ENCODE measurements at regions of chr6 and their contacts with region 1.

Region 1: GRCh38 chr6:106085984-106086813 is at the start of gene PRDM1:
- DNase-seq: peak; percentile 95
- H3K4me3 Mint-ChIP-seq: peak within 1 kb of the TSS; percentile 93
- H3K27ac Mint-ChIP-seq: peak within 1 kb of the TSS; percentile 87
- H3K4me1 Mint-ChIP-seq: peaks cover 72% of the 10 kb centered on the region
- H3K27me3 Mint-ChIP-seq: peaks cover 10% of the 10 kb centered on the region
- total RNA-seq, gene PRDM1: 35.9 and 37.4 TPM in 2 replicates

Region 2: DNA sequence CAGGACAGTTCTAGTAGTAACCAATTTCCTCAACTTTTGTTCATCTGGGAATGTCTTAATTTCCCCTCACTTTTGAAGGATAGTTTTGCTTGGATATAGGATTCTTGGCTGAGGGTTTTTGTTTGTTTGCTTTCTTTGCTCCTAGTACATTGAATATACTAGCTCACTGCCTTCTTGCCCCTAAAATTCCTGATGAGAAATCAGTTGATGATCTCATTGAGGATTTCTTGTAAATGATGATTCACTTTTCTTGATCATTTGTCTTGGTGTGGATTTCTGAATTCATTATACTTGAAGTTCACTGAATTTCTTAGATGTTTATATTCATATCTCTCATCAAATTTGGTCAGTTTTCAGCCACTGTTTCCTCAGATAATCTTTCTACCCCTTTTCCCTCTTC is 49.1 kb before region 1 on chr6:
- intact Hi-C with region 1: no loop called
- DNase-seq: no peak
- H3K4me3 Mint-ChIP-seq: peak overlapping the region; percentile 6
- H3K27ac Mint-ChIP-seq: no peak overlapping the region
- H3K4me1 Mint-ChIP-seq: peaks cover 14% of the 10 kb centered on the region
- H3K27me3 Mint-ChIP-seq: no peaks in the 10 kb centered on the region

Region 3: GRCh38 chr6:106223300-106223930 is 137.2 kb after region 1 on chr6:
- intact Hi-C with region 1: loop called (anchors 1 kb)
- DNase-seq: peak; percentile 91
- H3K4me3 Mint-ChIP-seq: no peak overlapping the region
- H3K27ac Mint-ChIP-seq: no peak overlapping the region
- H3K4me1 Mint-ChIP-seq: peaks cover 32% of the 10 kb centered on the region
- H3K27me3 Mint-ChIP-seq: no peaks in the 10 kb centered on the region

Region 4: DNA sequence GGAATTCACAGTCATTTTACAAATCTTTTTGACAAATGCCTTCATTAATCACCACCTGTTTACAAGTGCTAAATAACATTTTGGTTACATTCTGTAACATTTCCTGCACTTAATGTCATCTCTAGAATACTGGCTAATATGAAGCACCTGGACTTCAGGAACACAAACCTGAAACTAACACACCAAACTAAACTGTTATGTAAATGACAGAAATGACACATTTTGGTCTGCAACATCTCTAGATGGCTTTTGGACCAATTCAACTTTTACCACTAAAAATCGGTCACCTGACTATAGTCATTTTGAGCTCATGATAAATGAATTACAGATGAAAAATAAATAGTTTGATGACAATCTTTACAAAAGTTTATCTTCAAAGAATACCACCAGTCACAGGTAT is 158.7 kb after region 1 on chr6:
- intact Hi-C with region 1: no loop called
- DNase-seq: no peak
- H3K4me3 Mint-ChIP-seq: no peak overlapping the region
- H3K27ac Mint-ChIP-seq: no peak overlapping the region
- H3K4me1 Mint-ChIP-seq: peaks cover 11% of the 10 kb centered on the region
- H3K27me3 Mint-ChIP-seq: no peaks in the 10 kb centered on the region

Measured in activated CD4-positive, alpha-beta T cell treated with anti-CD3 and anti-CD28 coated beads, Interleukin-2, amount 10 ng/mL, durations not matched to agents 24 days and 14 days (primary cell).